Posterior vena cava (tissue), 2 donors: ENCODE measurements at regions of chr7 and their contacts with region 1.

Region 1: DNA sequence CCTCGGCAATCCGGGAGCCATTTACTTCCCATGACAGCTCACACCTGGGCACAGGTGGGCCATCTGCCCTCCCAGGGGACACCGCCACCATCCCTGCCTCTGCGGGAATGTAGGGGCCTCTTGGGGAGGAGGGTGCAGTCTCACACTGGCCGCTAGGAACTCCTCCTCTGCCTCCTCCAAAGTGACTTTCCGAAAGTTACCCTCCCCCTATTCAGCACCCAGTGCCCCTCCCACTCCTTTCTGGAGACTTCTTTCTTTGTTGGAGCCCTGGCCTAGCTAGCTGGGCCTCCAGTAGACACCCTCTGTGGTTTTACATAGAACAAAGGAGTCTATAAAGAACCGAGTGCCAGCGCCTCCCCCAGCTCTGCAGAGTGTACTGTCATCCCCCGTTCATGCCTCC is 45.8 kb upstream of the MNX1 start:
- DNase-seq: peak; percentile 69

Region 2: DNA sequence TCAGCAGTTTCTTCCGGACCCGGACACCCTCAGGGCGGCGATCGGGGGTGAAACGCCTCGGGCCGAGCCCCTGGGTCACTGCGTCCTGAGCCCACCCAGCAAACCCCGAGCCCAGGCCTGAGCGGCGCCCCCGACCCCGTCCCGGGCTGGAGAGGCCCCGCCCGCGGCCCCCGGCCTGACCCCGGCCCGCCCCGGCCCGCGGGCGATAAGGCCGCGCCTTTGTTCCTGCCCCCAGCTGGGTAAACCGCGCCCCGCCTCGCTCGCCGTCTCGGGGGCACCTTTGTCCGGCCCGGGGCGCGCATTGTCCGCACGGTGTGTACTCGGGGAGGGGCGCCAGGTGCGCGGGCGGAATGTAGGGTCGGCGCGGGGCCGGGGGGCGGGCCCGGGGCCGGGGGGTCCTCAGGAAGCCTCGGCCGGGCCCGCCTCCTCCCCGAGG is 56.6 kb before region 1 on chr7:
- intact Hi-C with region 1: loop called in 1 of 2 experiments (anchors 10 kb)
- DNase-seq: no peak

Region 3: DNA sequence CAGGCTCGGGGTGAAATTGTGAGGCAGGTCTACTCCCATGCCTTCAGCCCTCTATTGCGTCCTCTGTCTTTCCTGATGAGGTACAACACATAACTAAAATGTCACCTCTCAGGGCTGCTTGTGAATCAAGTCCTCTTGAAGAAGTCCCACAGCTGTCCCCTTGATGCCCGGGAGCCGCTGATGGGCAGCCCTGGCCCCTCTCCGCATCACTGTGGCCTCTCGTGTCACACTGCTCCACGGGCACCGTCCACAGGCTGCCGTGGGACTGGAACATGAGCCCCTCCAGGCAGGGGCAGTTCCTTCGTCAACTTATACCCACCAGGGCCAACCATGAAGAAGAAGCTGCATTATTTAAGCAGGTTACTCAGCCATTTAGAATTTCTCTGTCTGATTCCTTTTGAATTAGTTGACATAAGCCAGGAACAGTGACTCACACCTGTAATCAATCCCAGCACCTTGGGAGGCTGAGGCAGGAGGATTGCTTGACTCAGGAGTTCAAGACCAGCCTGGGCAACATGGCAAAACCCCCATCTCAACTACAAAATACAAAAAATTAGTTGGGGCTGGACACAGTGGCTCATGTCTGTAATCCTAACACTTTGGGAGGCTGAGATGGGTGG is 24.0 kb after region 1 on chr7:
- intact Hi-C with region 1: loop called in 1 of 2 experiments (anchors 1 kb)
- DNase-seq: peak; percentile 36

Region 4: GRCh38 chr7:157165987-157166386 is 109.7 kb after region 1 on chr7:
- intact Hi-C with region 1: no loop called
- DNase-seq: no peak